ENCODE measurements at regions of chr1 and their contacts with region 1.

Region 1: GRCh38 chr1:160149716-160150115 is 1.7 kb upstream of the ATP1A4 start:
- DNase-seq: no peak
- ATAC-seq: no peak
- H3K4me3 ChIP-seq: no peak overlapping the region
- H3K27ac ChIP-seq: peak overlapping the region; percentile 19 to 50; a peak in 3 of 6 replicates
- H3K4me1 ChIP-seq: peaks cover 11% of the 10 kb centered on the region; the same call in 2 of the 3 replicates
- CTCF ChIP-seq: no peak
- EP300 ChIP-seq: no peak
- POLR2A ChIP-seq: no peak
- RAD21 ChIP-seq: no peak

Region 2: DNA sequence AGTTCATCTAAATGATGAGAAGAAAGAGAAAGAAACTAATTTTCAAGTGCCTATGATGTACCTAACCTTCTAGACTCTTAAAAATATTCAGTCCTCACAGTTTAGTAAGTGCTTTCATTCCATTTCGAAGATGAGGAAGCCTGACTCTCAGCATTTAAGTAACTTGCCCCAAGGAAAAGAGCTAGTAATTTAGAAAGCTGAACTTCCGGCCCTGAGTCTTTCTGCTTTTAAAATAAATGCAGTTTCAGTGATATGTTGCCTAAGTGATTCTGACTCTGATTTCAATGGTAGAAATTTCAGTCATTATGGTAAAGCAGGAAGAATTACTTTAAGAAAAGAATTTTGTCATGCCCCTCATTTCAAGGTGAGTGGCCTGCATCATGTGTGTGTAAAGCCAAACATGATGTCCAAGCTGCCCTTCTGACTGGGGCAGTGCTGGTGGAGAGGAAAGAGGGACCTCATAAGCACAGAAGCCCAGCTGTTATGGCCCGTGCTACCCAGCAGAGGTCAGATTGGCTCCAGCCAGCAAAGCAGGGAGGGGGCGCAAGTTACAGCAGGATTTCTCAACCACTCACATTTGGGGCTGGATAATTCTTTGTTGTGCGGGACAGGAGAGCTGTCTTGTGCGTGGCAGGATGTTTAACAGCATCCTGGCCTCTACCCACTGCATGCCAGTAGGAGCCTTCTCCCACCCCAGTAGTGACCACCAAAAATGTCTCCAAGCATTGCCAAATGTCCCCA is 12.4 kb after region 1 on chr1:
- CTCF ChIA-PET with region 1: interaction called, 10 read pairs
- POLR2A ChIA-PET with region 1: no interaction called
- DNase-seq: peak in 1 of 2 experiments; percentile 27
- ATAC-seq: peak; percentile 35 to 76; a peak in 3 of 6 replicates
- H3K4me3 ChIP-seq: no peak overlapping the region
- H3K27ac ChIP-seq: no peak overlapping the region
- H3K4me1 ChIP-seq: peaks cover 7% of the 10 kb centered on the region; the same call in 1 of the 3 replicates
- CTCF ChIP-seq: no peak
- EP300 ChIP-seq: no peak
- POLR2A ChIP-seq: no peak
- RAD21 ChIP-seq: no peak; a peak in 1 of 5 replicates

Region 3: GRCh38 chr1:160177231-160177630 is 27.5 kb after region 1 on chr1:
- CTCF ChIA-PET with region 1: no interaction called
- POLR2A ChIA-PET with region 1: no interaction called
- DNase-seq: no peak
- ATAC-seq: no peak
- H3K4me3 ChIP-seq: no peak overlapping the region
- H3K27ac ChIP-seq: no peak overlapping the region
- H3K4me1 ChIP-seq: no peaks in the 10 kb centered on the region
- CTCF ChIP-seq: no peak
- EP300 ChIP-seq: no peak
- POLR2A ChIP-seq: no peak
- RAD21 ChIP-seq: no peak